A549 (cell line): ENCODE measurements at regions of chr17 and their contacts with region 1.

Region 1: GRCh38 chr17:48037036-48037837 is at the start of gene COPZ2:
- DNase-seq: peak; percentile 71 to 85
- ATAC-seq: peak; percentile 94 to 95
- H3K4me3 ChIP-seq: peak within 1 kb of the TSS; percentile 63
- H3K27ac ChIP-seq: peak within 1 kb of the TSS; percentile 74 to 91
- H3K4me1 ChIP-seq: 0 out of 3 replicates have a peak, but pooled peaks cover 3% of the 10 kb centered on the region
- CTCF ChIP-seq: peak; percentile 70
- EP300 ChIP-seq: no peak
- POLR2A ChIP-seq: peak; percentile 28
- RAD21 ChIP-seq: 0 out of 5 replicates have a peak, but pooled peaks have one; percentile 17 to 36
- polyA plus RNA-seq, gene COPZ2: 19.1 and 19.3 TPM in 2 replicates

Region 2: DNA sequence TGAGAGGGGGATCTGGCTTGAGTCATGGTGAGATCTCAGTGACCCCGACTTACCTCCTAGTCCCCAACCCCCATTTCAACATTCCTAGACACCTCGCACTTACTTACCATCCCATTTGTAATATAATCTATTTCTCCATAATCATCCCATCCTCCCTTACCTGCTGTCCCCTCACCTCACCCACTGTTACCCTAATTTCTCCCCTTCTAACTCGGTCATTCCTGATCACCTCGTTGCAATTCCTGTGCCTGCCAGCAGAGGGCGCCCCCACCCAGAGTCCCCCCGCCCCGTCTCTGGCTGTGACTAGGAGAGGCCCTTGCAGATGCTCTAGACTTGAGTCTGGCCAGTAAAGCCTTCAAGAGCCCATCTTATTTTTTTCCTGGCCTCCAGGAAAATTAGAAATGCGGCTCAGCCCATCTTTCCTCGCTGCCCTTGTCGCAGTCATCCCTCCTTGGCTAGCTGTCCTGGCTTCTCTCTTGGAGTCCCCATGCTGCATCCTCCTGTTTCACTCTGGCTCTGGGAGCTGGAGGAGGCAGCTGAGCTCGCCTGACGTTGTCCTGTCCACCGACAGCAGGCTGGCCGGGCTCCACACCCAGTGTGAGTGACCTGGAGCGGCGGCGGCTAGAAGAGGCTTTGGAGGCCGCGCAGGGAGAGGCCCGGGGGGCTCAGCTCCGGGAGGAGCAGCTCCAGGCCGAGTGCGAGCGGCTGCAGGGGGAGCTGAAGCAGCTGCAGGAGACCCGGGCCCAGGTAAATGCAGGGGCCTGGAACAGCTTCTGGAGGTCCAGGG is 338.3 kb before region 1 on chr17:
- CTCF ChIA-PET with region 1: no interaction called
- POLR2A ChIA-PET with region 1: no interaction called
- DNase-seq: peak; percentile 61 to 97
- ATAC-seq: peak; percentile 41 to 71; a peak in 5 of 6 replicates
- H3K4me3 ChIP-seq: no peak overlapping the region
- H3K27ac ChIP-seq: no peak overlapping the region
- H3K4me1 ChIP-seq: peaks cover 4% of the 10 kb centered on the region; the same call in 1 of the 3 replicates
- CTCF ChIP-seq: peak; percentile 96
- EP300 ChIP-seq: no peak
- POLR2A ChIP-seq: no peak
- RAD21 ChIP-seq: peak; percentile 71 to 80

Region 3: DNA sequence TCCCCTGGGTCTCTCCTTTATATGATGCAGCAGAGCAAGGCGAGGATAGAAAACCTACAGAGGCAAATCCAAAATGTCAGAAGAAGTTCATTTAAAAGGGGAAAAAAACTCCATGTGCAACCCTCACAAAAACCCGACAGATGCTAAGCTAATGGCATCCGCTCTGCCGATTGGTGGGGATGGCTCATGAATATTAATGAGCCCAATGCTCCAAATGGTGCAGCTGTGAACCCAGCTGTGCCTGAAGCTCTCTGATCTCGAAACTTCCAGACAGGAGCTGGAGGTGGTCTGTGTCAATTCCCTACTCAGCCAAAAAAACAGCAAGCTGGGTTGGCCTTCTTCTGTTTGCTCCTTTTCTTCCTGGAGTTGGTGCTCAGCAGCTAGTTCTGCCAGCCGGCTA is 85.9 kb after region 1 on chr17:
- CTCF ChIA-PET with region 1: interaction called, 12 read pairs
- POLR2A ChIA-PET with region 1: no interaction called
- DNase-seq: no peak
- ATAC-seq: no peak
- H3K4me3 ChIP-seq: no peak overlapping the region
- H3K27ac ChIP-seq: no peak overlapping the region
- H3K4me1 ChIP-seq: peaks cover 12% of the 10 kb centered on the region
- CTCF ChIP-seq: no peak
- EP300 ChIP-seq: no peak
- POLR2A ChIP-seq: no peak
- RAD21 ChIP-seq: no peak